Naive thymus-derived CD4-positive, alpha-beta T cell (primary cell): ENCODE measurements at regions of chr14 and their contacts with region 1.

Region 1: GRCh38 chr14:72420725-72421474 is 473.0 kb downstream of the DPF3 start:
- DNase-seq: peak in 8 of 9 donors; percentile 18 to 80 (median 40)
- ATAC-seq: peak; percentile 58
- H3K4me3 ChIP-seq: no peak overlapping the region
- H3K4me3 Mint-ChIP-seq: peak overlapping the region in 1 of 10 donors; percentile 38
- H3K27ac ChIP-seq: no peak overlapping the region
- H3K27ac Mint-ChIP-seq: peak overlapping the region in 2 of 9 donors; percentile 36 to 66
- H3K4me1 ChIP-seq: no peaks in the 10 kb centered on the region
- H3K4me1 Mint-ChIP-seq: peaks cover 0 to 21% (median 5%) of the 10 kb centered on the region in 7 donors
- H3K27me3 ChIP-seq: no peaks in the 10 kb centered on the region
- H3K27me3 Mint-ChIP-seq: peaks cover 0 to 11% (median 8%) of the 10 kb centered on the region in 5 donors

Region 2: GRCh38 chr14:72023722-72024407 is 397.0 kb before region 1 on chr14:
- CTCF ChIA-PET with region 1: no interaction called
- POLR2A ChIA-PET with region 1: no interaction called
- intact Hi-C with region 1: loop called in 1 of 2 experiments (anchors 1 kb)
- DNase-seq: peak in 5 of 9 donors; percentile 6 to 33 (median 17)
- ATAC-seq: peak; percentile 61
- H3K4me3 ChIP-seq: no peak overlapping the region
- H3K4me3 Mint-ChIP-seq: no peak overlapping the region
- H3K27ac ChIP-seq: no peak overlapping the region
- H3K27ac Mint-ChIP-seq: no peak overlapping the region
- H3K4me1 ChIP-seq: no peaks in the 10 kb centered on the region
- H3K4me1 Mint-ChIP-seq: peaks cover 0 to 9% (median 0%) of the 10 kb centered on the region in 7 donors
- H3K27me3 ChIP-seq: no peaks in the 10 kb centered on the region
- H3K27me3 Mint-ChIP-seq: peaks cover 35 to 49% (median 40%) of the 10 kb centered on the region in 5 donors

Region 3: GRCh38 chr14:72104011-72104613 is 316.8 kb before region 1 on chr14:
- CTCF ChIA-PET with region 1: no interaction called
- POLR2A ChIA-PET with region 1: no interaction called
- intact Hi-C with region 1: loop called in 1 of 2 experiments (anchors 5 kb)
- DNase-seq: peak in 4 of 9 donors; percentile 4 to 54 (median 9)
- ATAC-seq: no peak
- H3K4me3 ChIP-seq: no peak overlapping the region
- H3K4me3 Mint-ChIP-seq: no peak overlapping the region
- H3K27ac ChIP-seq: no peak overlapping the region
- H3K27ac Mint-ChIP-seq: no peak overlapping the region
- H3K4me1 ChIP-seq: no peaks in the 10 kb centered on the region
- H3K4me1 Mint-ChIP-seq: peaks cover 0 to 3% (median 0%) of the 10 kb centered on the region in 7 donors
- H3K27me3 ChIP-seq: no peaks in the 10 kb centered on the region
- H3K27me3 Mint-ChIP-seq: peaks cover 25 to 45% (median 39%) of the 10 kb centered on the region in 5 donors

Region 4: GRCh38 chr14:72186401-72186905 is 234.4 kb before region 1 on chr14:
- CTCF ChIA-PET with region 1: no interaction called
- POLR2A ChIA-PET with region 1: no interaction called
- intact Hi-C with region 1: no loop called
- DNase-seq: no peak
- ATAC-seq: no peak
- H3K4me3 ChIP-seq: no peak overlapping the region
- H3K4me3 Mint-ChIP-seq: no peak overlapping the region
- H3K27ac ChIP-seq: no peak overlapping the region
- H3K27ac Mint-ChIP-seq: no peak overlapping the region
- H3K4me1 ChIP-seq: no peaks in the 10 kb centered on the region
- H3K4me1 Mint-ChIP-seq: peaks cover 0 to 10% (median 3%) of the 10 kb centered on the region in 7 donors
- H3K27me3 ChIP-seq: no peaks in the 10 kb centered on the region
- H3K27me3 Mint-ChIP-seq: peaks cover 0 to 6% (median 3%) of the 10 kb centered on the region in 5 donors

Region 5: GRCh38 chr14:72408020-72408419 is 12.9 kb before region 1 on chr14:
- CTCF ChIA-PET with region 1: no interaction called
- POLR2A ChIA-PET with region 1: no interaction called
- intact Hi-C with region 1: no loop called
- DNase-seq: no peak
- ATAC-seq: no peak
- H3K4me3 ChIP-seq: no peak overlapping the region
- H3K4me3 Mint-ChIP-seq: no peak overlapping the region
- H3K27ac ChIP-seq: no peak overlapping the region
- H3K27ac Mint-ChIP-seq: no peak overlapping the region
- H3K4me1 ChIP-seq: no peaks in the 10 kb centered on the region
- H3K4me1 Mint-ChIP-seq: peaks cover 0 to 3% (median 0%) of the 10 kb centered on the region in 7 donors
- H3K27me3 ChIP-seq: no peaks in the 10 kb centered on the region
- H3K27me3 Mint-ChIP-seq: peaks cover 19 to 39% (median 28%) of the 10 kb centered on the region in 5 donors